ENCODE measurements at regions of chr17 and their contacts with region 1.

Region 1: DNA sequence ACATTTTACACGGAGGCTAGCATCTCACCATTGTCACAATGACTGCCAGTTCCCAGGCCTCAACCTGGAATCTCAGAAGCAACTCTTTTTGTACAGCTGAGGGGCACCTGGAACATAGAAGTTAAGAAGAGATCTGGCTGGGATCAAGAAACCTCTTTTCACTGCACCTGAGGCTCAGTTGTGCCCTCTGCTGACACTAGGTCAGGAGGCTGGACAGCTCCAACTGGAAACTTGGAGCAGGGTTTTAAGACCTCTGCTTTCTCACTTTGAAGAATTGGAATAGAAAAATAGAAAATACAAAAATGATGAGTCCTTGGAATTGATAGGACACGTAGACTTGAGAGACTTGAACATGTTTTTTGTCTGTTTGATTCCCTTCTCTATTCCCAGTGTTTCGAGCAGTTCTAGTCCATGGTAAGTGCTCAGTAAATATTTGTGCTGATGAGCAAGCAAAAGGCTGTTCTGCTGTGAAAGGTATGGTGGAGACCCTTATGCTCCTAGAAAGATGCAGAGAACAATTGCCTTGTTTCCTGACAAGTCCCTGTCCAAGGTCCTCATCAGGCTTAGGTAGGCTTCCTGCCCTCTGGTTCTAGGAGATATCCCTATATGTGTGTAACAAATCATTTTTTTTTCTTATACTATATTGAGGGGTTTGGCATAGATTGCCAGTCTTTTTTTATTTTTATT is 13.6 kb upstream of the PPM1D start:
- DNase-seq: no peak
- ATAC-seq: peak; percentile 86
- H3K4me3 ChIP-seq: no peak overlapping the region
- H3K27ac ChIP-seq: no peak overlapping the region
- H3K4me1 ChIP-seq: peaks cover 0 to 3% of the 10 kb centered on the region in 2 experiments; a peak in 1 of 4 replicates
- H3K27me3 ChIP-seq: no peaks in the 10 kb centered on the region
- CTCF ChIP-seq: peak; percentile 48 to 56 (median 50); a peak in 5 of 6 replicates
- POLR2A ChIP-seq: no peak
- RAD21 ChIP-seq: peak; percentile 59

Region 2: DNA sequence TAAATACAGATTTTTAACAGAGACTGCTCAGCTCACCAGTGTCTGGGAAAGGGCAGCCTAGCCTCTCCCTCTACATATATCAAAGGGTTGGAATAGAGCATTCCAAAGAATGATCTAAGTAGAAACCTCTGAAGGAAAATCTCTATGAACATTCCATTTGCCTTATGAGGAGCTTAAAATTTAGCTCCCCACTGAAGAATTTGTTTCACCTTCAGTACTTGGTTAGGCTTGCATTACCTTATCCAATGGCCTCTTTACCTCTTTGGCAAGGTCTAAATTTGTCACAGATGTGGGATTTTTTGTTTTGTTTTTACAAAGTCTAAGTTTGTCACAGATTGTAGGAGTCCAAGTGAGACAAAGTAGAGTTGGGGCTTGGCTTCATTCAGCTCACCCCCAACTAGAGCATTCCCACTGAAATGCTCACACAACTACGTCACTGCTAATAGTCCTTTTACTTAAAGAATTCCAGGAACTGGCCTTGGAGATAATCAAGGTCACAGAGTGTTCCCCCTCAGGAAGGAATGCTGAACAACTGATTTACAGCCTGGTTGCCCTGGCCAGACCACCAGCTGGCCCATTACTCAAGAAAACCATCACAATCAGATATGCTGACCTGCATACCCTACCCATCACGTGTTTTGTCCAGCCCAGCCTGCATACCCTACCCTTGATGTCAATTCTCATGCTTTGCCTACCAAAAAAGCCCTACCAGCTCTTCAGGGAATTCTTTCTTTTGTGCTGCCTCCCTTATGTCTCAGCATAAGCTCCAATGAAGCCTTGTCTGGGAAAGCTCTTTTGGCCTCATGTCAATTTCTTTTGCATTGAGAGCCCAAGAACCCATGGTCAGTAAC is 13.0 kb before region 1 on chr17:
- CTCF ChIA-PET with region 1: interaction called, 12 read pairs
- POLR2A ChIA-PET with region 1: no interaction called
- RAD21 ChIA-PET with region 1: no interaction called
- intact Hi-C with region 1: no loop called
- DNase-seq: no peak
- ATAC-seq: no peak
- H3K4me3 ChIP-seq: no peak overlapping the region
- H3K27ac ChIP-seq: no peak overlapping the region
- H3K4me1 ChIP-seq: no peaks in the 10 kb centered on the region
- H3K27me3 ChIP-seq: no peaks in the 10 kb centered on the region
- CTCF ChIP-seq: no peak
- POLR2A ChIP-seq: no peak
- RAD21 ChIP-seq: no peak

Region 3: GRCh38 chr17:60743799-60744198 is 157.4 kb after region 1 on chr17:
- CTCF ChIA-PET with region 1: no interaction called
- POLR2A ChIA-PET with region 1: no interaction called
- RAD21 ChIA-PET with region 1: no interaction called
- intact Hi-C with region 1: no loop called
- DNase-seq: peak; percentile 28
- ATAC-seq: peak; percentile 54; the same call in 1 of the 2 replicates
- H3K4me3 ChIP-seq: no peak overlapping the region
- H3K27ac ChIP-seq: peak overlapping the region; percentile 17; the same call in 1 of the 2 replicates
- H3K4me1 ChIP-seq: peaks cover 11 to 17% of the 10 kb centered on the region in 2 experiments
- H3K27me3 ChIP-seq: no peaks in the 10 kb centered on the region
- CTCF ChIP-seq: no peak
- POLR2A ChIP-seq: no peak
- RAD21 ChIP-seq: 0 out of 2 replicates have a peak, but pooled peaks have one; percentile 2

Measured in HCT116 (cell line).